ENCODE measurements at regions of chr6 and their contacts with region 1.

Region 1: GRCh38 chr6:35146453-35146852 is 5.3 kb upstream of the TCP11 start:
- DNase-seq: peak; percentile 64
- H3K4me3 ChIP-seq: no peak overlapping the region
- CTCF ChIP-seq: peak; percentile 77

Region 2: GRCh38 chr6:35202066-35202546 is 55.7 kb after region 1 on chr6:
- in situ Hi-C with region 1: loop called (anchors 5 kb)
- DNase-seq: no peak
- H3K4me3 ChIP-seq: no peak overlapping the region
- CTCF ChIP-seq: no peak